Heart left ventricle (tissue), 16 donors: ENCODE measurements at regions of chr19 and their contacts with region 1.

Region 1: DNA sequence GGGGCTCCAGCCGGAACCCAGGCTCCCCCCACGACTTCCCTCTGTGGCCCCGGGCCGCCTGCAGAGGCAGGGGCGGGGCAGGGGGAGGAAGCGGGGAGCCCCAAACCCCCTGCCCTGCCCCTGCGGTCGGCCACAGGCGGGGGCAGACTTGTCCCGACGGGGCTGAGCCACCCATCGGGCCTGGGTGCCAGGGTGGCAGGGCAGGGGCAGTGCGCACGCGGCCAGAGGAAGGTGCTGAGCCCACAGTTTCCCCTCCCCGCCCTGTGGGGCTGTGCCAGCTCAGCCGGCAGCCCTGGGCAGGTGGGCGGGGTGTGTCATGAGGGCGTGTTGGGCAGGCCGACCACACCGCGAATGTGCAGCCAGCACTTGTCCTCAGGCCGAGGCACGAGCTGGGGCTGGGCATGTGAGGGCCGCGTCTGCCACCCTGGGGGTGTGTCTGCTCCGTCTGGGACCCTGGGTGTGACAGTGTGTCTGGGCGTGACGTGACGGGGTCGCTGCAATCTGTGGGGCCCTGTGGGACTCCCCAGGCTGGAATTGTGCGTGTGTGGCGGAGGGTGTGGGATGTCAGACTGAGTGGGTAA is 17.7 kb downstream of the CCDC97 start:
- DNase-seq: peak; percentile 78 to 91 (median 84)
- ATAC-seq: peak; percentile 8 to 57 (median 38)
- H3K4me3 ChIP-seq: peak overlapping the region in 10 of 12 donors; percentile 18 to 49 (median 44)
- H3K27ac ChIP-seq: peak overlapping the region; percentile 66 to 95 (median 88)
- H3K4me1 ChIP-seq: peaks cover 4 to 95% (median 63%) of the 10 kb centered on the region in 12 donors
- H3K27me3 ChIP-seq: no peaks in the 10 kb centered on the region
- CTCF ChIP-seq: no peak
- POLR2A ChIP-seq: no peak

Region 2: DNA sequence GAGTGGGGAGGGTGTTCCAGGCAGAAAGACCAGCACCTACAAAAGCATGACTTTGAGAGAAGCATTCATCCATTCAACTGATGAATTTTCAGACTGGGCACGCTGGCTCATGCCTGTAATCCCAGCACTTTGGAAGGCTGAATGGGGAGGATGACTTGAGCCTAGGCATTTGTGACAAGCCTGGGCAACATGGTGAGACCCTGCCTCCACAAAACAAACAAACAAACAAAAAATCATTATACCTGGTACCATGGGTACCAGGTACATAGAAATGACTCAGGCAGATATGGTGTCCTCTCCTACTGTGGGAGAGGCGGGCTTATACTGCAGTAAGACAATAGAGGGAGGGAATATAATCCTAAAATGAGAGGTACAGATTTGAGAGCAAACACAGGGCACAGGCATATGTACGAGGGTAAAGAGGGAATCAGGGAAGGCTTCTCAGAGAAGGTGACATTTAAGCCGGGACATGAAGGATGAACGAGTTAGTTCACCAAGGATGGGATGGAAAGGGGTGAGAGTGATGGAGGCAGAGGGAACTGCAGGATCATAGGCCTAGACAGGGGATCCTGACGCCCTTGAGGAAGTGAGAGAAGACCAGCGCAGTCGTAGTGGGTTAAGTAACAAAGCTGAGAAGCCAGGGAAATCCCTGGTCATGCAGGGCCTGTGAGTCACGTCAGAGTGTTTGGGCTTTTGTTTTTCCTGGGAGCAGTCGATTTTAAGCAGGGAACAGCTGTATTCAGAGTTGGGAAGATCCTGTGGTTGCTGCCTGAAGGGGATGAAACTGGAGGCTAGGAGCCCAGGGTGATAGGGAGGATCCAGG is 131.8 kb before region 1 on chr19:
- intact Hi-C with region 1: no loop called
- DNase-seq: no peak
- ATAC-seq: peak in 2 of 4 donors; percentile 28 to 35
- H3K4me3 ChIP-seq: no peak overlapping the region
- H3K27ac ChIP-seq: no peak overlapping the region
- H3K4me1 ChIP-seq: peaks cover 0 to 21% (median 0%) of the 10 kb centered on the region in 12 donors
- H3K27me3 ChIP-seq: peaks cover 10 to 50% (median 24%) of the 10 kb centered on the region in 9 donors
- CTCF ChIP-seq: no peak
- POLR2A ChIP-seq: no peak

Region 3: DNA sequence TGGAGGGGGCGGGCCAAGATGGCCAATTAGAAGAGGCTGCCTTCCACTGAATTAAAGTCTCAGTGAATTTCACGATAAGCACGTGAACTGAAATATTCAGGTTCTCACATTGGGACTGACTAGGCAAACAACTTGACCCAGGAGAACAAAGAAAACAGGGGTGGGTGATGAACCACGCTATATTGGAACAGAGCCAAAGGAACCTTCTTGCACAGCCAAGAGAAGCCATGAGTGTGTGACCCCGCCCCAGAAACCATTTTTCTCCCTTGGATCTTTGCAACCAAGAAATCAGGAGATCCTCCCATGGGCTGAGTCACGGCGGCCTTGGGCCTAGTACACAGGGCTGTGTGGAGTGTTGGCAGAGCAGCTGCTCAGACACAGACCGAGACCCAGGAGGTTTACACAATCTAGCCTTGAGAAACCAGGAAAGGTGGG is 152.1 kb after region 1 on chr19:
- intact Hi-C with region 1: no loop called
- DNase-seq: peak in 4 of 5 donors; percentile 60 to 80 (median 62)
- ATAC-seq: peak; percentile 83 to 88 (median 86)
- H3K4me3 ChIP-seq: peak overlapping the region in 8 of 12 donors; percentile 17 to 55 (median 32)
- H3K27ac ChIP-seq: peak overlapping the region in 11 of 12 donors; percentile 56 to 89 (median 80)
- H3K4me1 ChIP-seq: peaks cover 0 to 33% (median 11%) of the 10 kb centered on the region in 12 donors
- H3K27me3 ChIP-seq: peaks cover 0 to 22% (median 4%) of the 10 kb centered on the region in 9 donors
- CTCF ChIP-seq: no peak
- POLR2A ChIP-seq: no peak

Region 4: GRCh38 chr19:41541990-41542584 is 214.4 kb after region 1 on chr19:
- intact Hi-C with region 1: loop called in 1 of 10 experiments (anchors 10 kb)
- DNase-seq: peak in 4 of 5 donors; percentile 47 to 83 (median 53)
- ATAC-seq: no peak
- H3K4me3 ChIP-seq: no peak overlapping the region
- H3K27ac ChIP-seq: no peak overlapping the region
- H3K4me1 ChIP-seq: peaks cover 0 to 30% (median 3%) of the 10 kb centered on the region in 12 donors
- H3K27me3 ChIP-seq: peaks cover 0 to 14% (median 0%) of the 10 kb centered on the region in 9 donors
- CTCF ChIP-seq: peak; percentile 44 to 78 (median 64)
- POLR2A ChIP-seq: no peak